MCF 10A (cell line): ENCODE measurements at regions of chr12 and their contacts with region 1.

Region 1: DNA sequence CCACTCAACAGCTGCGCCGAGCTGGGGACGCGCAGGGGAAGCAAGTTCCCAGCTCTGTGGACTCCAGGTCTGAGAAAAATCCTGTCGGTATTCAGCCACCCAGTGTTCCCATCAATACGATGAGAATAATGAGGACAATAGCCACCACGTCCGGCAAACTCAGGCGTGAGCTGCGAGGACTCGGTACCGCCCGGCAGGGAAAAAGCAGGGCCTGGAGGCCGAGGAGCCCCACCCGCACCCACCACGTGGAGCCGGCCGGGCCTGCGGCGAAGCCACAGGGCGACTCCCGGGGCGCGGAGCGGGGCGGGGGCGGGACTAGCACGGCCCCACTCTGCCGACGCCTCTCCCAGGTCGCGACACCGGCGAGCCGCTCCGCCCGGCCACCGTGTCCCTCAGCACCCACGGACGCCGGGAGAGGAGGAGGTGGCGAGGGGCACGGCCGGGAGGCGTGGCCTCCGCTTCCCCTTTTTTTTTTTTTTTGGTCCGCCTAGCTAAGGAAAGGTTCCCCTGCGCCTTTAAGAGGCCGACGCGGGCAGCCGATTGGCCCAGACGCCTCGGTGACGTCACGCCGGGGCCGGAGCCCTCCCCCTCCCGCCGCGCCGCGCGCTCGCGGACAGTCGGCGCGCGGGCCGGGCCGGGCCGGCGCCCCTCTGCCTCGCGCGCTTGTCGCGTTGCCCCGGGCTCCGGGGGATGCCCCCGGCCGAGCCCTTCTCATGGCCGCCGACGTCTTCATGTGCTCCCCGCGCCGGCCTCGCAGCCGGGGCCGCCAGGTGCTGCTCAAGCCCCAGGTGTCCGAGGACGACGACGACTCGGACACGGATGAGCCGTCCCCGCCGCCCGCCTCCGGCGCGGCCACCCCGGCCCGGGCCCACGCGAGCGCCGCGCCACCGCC is at the start of gene MLXIP:
- DNase-seq: peak; percentile 91
- H3K4me3 Mint-ChIP-seq: peak within 1 kb of the TSS; percentile 74
- H3K27ac Mint-ChIP-seq: peak within 1 kb of the TSS; percentile 43
- H3K4me1 Mint-ChIP-seq: peaks cover 18% of the 10 kb centered on the region
- H3K27me3 Mint-ChIP-seq: no peaks in the 10 kb centered on the region
- CTCF ChIP-seq: no peak
- total RNA-seq, gene MLXIP: 34.2 and 35.6 TPM in 2 replicates

Region 2: DNA sequence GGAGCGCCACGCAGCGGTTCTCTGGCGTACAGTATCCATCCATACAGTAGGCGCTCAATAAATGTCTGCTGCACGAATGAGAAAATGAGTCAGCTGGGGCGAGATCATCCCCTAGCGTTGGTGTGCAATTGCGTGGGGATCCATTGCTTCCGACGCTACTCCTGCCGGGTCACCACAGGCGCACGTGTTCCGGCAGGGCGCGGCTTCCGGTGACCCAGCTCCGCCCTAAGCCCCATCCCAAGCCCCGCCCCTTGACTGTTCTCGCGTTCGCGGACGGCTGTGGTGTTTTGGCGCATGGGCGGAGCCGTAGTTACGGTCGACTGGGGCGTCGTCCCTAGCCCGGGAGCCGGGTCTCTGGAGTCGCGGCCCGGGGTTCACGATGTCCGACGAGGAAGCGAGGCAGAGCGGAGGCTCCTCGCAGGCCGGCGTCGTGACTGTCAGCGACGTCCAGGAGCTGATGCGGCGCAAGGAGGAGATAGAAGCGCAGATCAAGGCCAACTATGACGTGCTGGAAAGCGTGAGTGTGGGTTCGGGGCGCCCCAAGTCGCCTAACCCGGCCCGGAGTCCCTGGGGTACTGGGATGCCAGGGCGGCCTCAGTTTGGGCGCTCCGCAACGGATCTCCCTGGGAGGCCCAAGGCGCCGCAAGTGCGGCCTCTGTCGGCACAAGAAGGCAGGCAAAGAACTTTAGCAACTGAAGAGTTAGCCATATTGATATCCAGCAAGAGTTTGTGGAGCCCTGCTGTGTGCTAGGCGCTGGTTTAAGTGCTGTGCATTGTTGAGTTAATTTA is 189.7 kb before region 1 on chr12 and contains the start of gene PSMD9:
- CTCF ChIA-PET with region 1: no interaction called
- POLR2A ChIA-PET with region 1: interaction called, 10 read pairs
- intact Hi-C with region 1: no loop called
- DNase-seq: peak; percentile 97
- H3K4me3 Mint-ChIP-seq: peak within 1 kb of the TSS; percentile 98
- H3K27ac Mint-ChIP-seq: peak within 1 kb of the TSS; percentile 98
- H3K4me1 Mint-ChIP-seq: peaks cover 13% of the 10 kb centered on the region
- H3K27me3 Mint-ChIP-seq: no peaks in the 10 kb centered on the region
- CTCF ChIP-seq: peak; percentile 62
- total RNA-seq, gene PSMD9: 96.3 and 105 TPM in 2 replicates

Region 3: DNA sequence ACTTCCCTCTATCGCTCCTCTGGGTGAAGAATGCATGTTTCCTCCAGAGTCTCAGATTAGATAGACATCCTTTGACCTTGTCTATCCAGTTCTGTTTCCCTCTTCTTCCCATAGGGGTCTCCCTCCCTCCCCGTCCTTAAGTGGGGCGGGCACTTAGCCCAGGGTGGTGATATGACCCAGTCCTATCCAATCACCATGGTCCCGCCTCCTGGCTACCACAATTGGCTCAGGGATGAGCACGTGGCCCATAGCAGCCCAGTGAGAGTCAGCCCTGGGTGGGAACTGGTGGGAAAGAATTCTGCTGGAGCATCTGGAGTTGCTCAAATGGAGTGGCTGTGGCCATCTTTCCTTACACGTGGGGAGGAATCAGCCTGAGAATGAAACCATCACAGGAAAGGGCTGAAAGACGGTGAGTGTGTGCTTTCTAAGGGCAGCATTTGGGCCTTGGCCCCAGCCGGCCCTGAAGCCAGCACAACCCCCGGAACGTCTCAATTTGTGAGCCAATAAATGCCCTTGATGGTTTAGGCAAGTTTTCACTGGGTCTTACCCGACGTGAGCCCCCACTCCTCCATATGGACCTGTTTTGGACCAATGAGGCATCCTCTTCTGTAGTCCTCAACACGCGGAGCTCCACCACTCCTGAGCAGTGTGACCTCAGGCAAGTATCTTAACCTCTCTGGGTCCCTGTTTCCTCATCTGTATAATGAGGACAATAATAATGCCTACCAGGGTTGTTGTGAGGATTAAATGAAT is 14.2 kb before region 1 on chr12:
- CTCF ChIA-PET with region 1: interaction called, 3 read pairs
- POLR2A ChIA-PET with region 1: interaction called, 28 read pairs
- intact Hi-C with region 1: no loop called
- DNase-seq: peak; percentile 86
- H3K4me3 Mint-ChIP-seq: no peak overlapping the region
- H3K27ac Mint-ChIP-seq: no peak overlapping the region
- H3K4me1 Mint-ChIP-seq: peaks cover 13% of the 10 kb centered on the region
- H3K27me3 Mint-ChIP-seq: no peaks in the 10 kb centered on the region
- CTCF ChIP-seq: no peak

Region 4: GRCh38 chr12:122097927-122098756 is 19.8 kb after region 1 on chr12:
- CTCF ChIA-PET with region 1: interaction called, 6 read pairs
- POLR2A ChIA-PET with region 1: interaction called, 206 read pairs
- intact Hi-C with region 1: no loop called
- DNase-seq: no peak
- H3K4me3 Mint-ChIP-seq: peak overlapping the region; percentile 51
- H3K27ac Mint-ChIP-seq: peak overlapping the region; percentile 97
- H3K4me1 Mint-ChIP-seq: peaks cover 39% of the 10 kb centered on the region
- H3K27me3 Mint-ChIP-seq: no peaks in the 10 kb centered on the region
- CTCF ChIP-seq: no peak

Region 5: DNA sequence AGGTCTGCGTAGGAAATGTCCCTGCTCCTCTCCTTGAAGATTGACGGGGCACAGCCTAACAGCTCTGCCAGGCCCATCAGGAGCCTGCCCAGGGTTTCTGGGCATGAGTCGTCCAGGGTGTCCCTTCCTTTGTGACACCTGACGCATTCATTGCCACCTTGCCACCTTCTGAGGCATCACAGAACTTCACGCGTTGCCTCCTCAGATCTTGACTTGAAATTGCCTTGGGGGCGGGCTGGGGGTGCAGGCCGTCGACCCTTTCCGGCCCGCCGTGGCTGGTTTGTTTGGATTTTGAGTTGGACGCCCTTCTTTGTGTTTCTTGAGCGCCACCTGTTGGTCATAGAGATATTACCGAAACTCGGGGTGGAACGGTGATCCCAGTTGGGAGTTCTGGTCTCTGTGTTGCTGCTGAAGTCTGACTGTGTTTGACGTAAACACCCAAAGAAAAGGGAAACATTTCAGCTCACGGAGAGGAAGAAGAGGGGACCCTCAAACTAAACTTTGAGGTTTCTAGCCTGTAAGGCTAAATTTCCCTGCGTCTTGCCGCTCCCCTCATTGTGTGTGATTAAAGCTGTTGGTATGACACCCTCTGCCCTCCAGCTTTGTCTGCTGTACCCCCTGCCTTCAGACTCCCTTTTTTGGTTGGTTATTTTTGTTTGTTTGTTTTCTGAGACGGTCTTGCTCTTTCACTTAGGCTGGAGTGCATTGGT is 44.8 kb after region 1 on chr12:
- CTCF ChIA-PET with region 1: interaction called, 17 read pairs
- POLR2A ChIA-PET with region 1: interaction called, 12 read pairs
- intact Hi-C with region 1: loop called (anchors 2 kb)
- DNase-seq: peak; percentile 84
- H3K4me3 Mint-ChIP-seq: peak overlapping the region; percentile 1
- H3K27ac Mint-ChIP-seq: no peak overlapping the region
- H3K4me1 Mint-ChIP-seq: peaks cover 19% of the 10 kb centered on the region
- H3K27me3 Mint-ChIP-seq: no peaks in the 10 kb centered on the region
- CTCF ChIP-seq: peak; percentile 82